Endothelial cell of umbilical vein (primary cell): ENCODE measurements at regions of chr4 and their contacts with region 1.

Region 1: GRCh38 chr4:77697860-77698590 is 92.4 kb downstream of the CXCL13 start:
- DNase-seq: peak; percentile 89
- H3K4me3 ChIP-seq: no peak overlapping the region
- H3K27ac ChIP-seq: no peak overlapping the region
- H3K4me1 ChIP-seq: peaks cover 27% of the 10 kb centered on the region
- H3K27me3 ChIP-seq: no peaks in the 10 kb centered on the region
- CTCF ChIP-seq: peak; percentile 41 to 50
- POLR2A ChIP-seq: no peak

Region 2: DNA sequence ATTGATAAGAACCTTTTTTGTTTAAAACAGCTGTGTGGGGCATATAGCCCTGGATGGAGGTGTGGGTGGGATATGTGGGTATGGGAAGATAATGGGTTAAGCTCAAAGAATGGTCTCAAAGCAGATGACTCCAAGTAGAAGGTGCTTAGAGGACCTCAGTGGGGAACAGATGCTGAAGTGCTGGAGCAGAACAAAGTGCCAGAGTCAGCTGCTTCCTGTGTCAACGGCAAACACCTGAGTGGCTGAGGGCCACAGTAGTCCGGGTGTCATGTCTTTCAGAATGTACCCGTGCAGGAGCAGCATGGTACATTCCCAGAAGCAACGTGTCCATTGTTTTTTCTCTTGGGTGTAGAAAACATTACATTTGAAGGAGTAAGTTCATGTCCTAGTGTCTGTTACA is 330.4 kb before region 1 on chr4:
- CTCF ChIA-PET with region 1: interaction called, 4 read pairs
- POLR2A ChIA-PET with region 1: no interaction called
- dilution Hi-C with region 1: no loop called
- intact Hi-C with region 1: loop called (anchors 5 kb)
- DNase-seq: no peak
- H3K4me3 ChIP-seq: no peak overlapping the region
- H3K27ac ChIP-seq: no peak overlapping the region
- H3K4me1 ChIP-seq: no peaks in the 10 kb centered on the region
- H3K27me3 ChIP-seq: peaks cover 0 to under 1% of the 10 kb centered on the region in 2 experiments
- CTCF ChIP-seq: no peak
- POLR2A ChIP-seq: no peak

Region 3: GRCh38 chr4:77385124-77385969 is 312.7 kb before region 1 on chr4:
- CTCF ChIA-PET with region 1: interaction called, 24 read pairs
- POLR2A ChIA-PET with region 1: no interaction called
- dilution Hi-C with region 1: no loop called
- intact Hi-C with region 1: loop called (anchors 1 kb)
- DNase-seq: peak; percentile 71
- H3K4me3 ChIP-seq: no peak overlapping the region
- H3K27ac ChIP-seq: no peak overlapping the region
- H3K4me1 ChIP-seq: no peaks in the 10 kb centered on the region
- H3K27me3 ChIP-seq: peaks cover 6 to 14% of the 10 kb centered on the region in 2 experiments
- CTCF ChIP-seq: peak; percentile 81
- POLR2A ChIP-seq: no peak

Region 4: GRCh38 chr4:77465271-77465670 is 232.8 kb before region 1 on chr4:
- CTCF ChIA-PET with region 1: interaction called, 6 read pairs
- POLR2A ChIA-PET with region 1: no interaction called
- dilution Hi-C with region 1: no loop called
- intact Hi-C with region 1: loop called (anchors 1 kb)
- DNase-seq: no peak
- H3K4me3 ChIP-seq: no peak overlapping the region
- H3K27ac ChIP-seq: no peak overlapping the region
- H3K4me1 ChIP-seq: no peaks in the 10 kb centered on the region
- H3K27me3 ChIP-seq: no peaks in the 10 kb centered on the region
- CTCF ChIP-seq: peak in 1 of 2 donors; percentile 21
- POLR2A ChIP-seq: no peak

Region 5: DNA sequence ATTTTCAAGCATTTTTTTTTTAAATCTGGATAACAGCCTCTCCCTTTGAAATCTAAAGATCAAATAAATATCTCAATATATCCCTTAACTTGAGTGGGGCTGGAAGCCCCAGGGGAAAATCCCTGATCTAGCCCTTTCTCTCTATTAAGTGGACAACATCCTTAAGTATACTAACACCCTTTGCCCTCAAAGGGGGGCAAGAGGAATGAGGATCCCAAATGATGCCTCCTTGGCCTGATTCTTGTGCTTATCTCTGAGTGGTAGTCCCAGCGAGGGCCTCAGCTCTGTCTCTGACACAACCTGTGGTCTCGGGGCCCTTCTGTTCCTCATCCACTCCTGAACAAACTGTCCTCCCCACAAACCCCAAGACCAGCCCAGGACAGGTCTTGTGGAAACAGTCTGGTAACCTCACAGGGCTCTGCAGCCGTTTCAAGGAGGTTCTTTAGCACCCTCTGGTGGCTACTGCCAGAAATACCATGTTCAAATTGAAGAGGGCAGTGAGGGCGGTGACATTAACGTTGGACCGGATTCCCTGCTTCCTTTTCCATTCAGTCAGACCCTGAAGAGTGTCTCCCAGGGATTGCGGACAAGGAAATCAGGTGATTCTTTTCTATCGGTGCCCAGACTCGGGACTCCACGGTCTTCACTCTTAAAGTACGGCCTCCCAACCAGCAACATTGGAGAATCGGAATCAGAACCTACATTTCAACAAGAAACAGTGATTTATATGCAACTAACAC is 79.5 kb before region 1 on chr4:
- CTCF ChIA-PET with region 1: interaction called, 8 read pairs
- POLR2A ChIA-PET with region 1: no interaction called
- dilution Hi-C with region 1: no loop called
- intact Hi-C with region 1: loop called (anchors 1 kb)
- DNase-seq: peak; percentile 75
- H3K4me3 ChIP-seq: no peak overlapping the region
- H3K27ac ChIP-seq: no peak overlapping the region
- H3K4me1 ChIP-seq: no peaks in the 10 kb centered on the region
- H3K27me3 ChIP-seq: peaks cover 2 to 8% of the 10 kb centered on the region in 2 experiments
- CTCF ChIP-seq: peak; percentile 84 to 90
- POLR2A ChIP-seq: no peak

Region 6: DNA sequence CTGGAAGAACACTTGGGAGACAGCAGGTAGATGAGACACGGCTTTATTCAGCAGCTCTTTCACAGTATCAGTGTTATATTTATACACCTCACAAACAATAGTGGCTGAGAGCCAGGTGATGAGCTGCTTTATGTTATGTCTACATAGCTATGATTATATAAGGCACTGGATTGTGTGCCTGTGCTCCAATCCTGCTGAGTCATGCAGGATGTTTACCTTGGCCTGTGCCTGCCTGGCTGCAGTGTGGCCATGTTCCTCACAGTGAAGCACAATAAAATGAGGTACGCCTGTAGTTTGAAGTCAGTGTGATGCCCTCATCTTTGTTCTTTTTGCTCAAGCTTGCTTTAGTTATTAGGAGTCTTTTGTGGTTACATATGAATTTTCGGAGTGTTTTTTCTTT is 61.1 kb before region 1 on chr4:
- CTCF ChIA-PET with region 1: interaction called, 10 read pairs
- POLR2A ChIA-PET with region 1: no interaction called
- dilution Hi-C with region 1: no loop called
- intact Hi-C with region 1: loop called (anchors 2 kb)
- DNase-seq: peak; percentile 97
- H3K4me3 ChIP-seq: no peak overlapping the region
- H3K27ac ChIP-seq: peak overlapping the region; percentile 51
- H3K4me1 ChIP-seq: peaks cover 10% of the 10 kb centered on the region
- H3K27me3 ChIP-seq: peaks cover 0 to 1% of the 10 kb centered on the region in 2 experiments
- CTCF ChIP-seq: no peak
- POLR2A ChIP-seq: no peak

Region 7: DNA sequence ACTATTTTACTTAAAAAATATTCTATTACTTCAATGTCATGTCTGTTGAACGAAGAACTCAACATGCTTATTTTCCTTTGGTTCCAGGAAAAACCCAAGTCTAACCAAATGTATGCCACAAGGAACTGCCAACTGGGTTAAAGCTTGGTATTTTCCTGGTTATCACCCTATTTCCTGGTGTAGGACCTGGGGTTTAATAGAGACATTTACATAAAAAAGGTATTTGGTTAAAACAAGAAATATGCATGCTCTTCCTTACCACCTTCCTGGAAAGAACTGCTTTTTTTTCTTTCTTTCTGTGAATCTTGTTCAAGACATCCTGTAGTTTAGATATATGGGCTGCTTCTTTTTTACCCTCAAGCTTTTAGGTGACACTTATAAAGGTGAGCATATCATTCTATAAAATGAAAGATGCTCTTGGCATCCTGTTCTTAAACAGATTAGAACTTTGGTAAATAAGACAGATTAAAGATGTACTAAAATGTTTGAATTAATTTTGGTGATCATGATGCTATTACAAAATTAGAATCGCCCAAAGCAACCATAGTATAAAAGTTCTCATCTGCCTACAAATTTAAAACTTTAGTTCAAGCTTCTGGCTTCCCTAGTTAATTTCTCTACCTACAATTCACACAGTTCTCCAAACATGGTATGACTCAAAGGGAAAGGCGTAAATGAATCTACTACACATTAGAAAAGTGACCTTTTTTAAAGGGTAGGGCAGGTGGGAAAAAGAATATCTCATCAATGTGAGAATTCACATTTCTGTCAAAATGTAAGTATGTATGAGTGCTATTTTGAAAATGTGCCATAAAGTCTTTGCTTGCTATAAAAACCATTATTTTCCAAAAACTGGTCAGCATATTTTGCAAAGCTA is 17.6 kb after region 1 on chr4:
- CTCF ChIA-PET with region 1: no interaction called
- POLR2A ChIA-PET with region 1: no interaction called
- dilution Hi-C with region 1: no loop called
- intact Hi-C with region 1: no loop called
- DNase-seq: no peak
- H3K4me3 ChIP-seq: no peak overlapping the region
- H3K27ac ChIP-seq: no peak overlapping the region
- H3K4me1 ChIP-seq: no peaks in the 10 kb centered on the region
- H3K27me3 ChIP-seq: no peaks in the 10 kb centered on the region
- CTCF ChIP-seq: no peak
- POLR2A ChIP-seq: no peak

Region 8: DNA sequence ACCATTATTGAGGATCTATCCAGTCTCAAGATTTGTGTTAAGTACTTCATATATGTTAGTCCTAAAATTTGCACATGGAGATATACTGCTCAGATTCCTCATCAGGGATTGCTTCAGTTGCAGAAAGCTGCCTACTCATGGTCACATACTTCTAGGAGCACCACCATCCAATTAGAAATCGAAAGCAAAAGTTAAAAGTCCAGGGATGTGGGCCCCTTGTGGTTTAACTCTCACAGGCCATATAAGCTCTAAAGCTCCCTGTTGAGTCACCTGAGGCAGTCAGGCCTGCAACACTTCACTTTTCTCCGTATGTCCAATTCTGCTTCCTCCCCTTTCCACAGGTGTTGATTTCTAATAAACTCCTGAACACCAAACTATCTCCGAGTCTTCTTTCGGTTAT is 36.9 kb after region 1 on chr4:
- CTCF ChIA-PET with region 1: no interaction called
- POLR2A ChIA-PET with region 1: no interaction called
- dilution Hi-C with region 1: no loop called
- intact Hi-C with region 1: no loop called
- DNase-seq: no peak
- H3K4me3 ChIP-seq: no peak overlapping the region
- H3K27ac ChIP-seq: no peak overlapping the region
- H3K4me1 ChIP-seq: no peaks in the 10 kb centered on the region
- H3K27me3 ChIP-seq: no peaks in the 10 kb centered on the region
- CTCF ChIP-seq: no peak
- POLR2A ChIP-seq: no peak